Gastrocnemius medialis (tissue), 4 donors: ENCODE measurements at regions of chr1 and their contacts with region 1.

Region 1: GRCh38 chr1:86950712-86951419 is 36.4 kb downstream of the HS2ST1 start:
- DNase-seq: no peak
- ATAC-seq: no peak
- H3K4me3 ChIP-seq: no peak overlapping the region
- H3K27ac ChIP-seq: no peak overlapping the region
- H3K4me1 ChIP-seq: peaks cover 0 to 11% of the 10 kb centered on the region in 2 donors
- H3K27me3 ChIP-seq: no peaks in the 10 kb centered on the region
- CTCF ChIP-seq: no peak
- POLR2A ChIP-seq: no peak

Region 2: GRCh38 chr1:86218859-86219258 is 732.0 kb before region 1 on chr1:
- in situ Hi-C with region 1: no loop called
- intact Hi-C with region 1: no loop called
- DNase-seq: no peak
- ATAC-seq: no peak
- H3K4me3 ChIP-seq: no peak overlapping the region
- H3K27ac ChIP-seq: no peak overlapping the region
- H3K4me1 ChIP-seq: no peaks in the 10 kb centered on the region
- H3K27me3 ChIP-seq: no peaks in the 10 kb centered on the region
- CTCF ChIP-seq: no peak
- POLR2A ChIP-seq: no peak

Region 3: DNA sequence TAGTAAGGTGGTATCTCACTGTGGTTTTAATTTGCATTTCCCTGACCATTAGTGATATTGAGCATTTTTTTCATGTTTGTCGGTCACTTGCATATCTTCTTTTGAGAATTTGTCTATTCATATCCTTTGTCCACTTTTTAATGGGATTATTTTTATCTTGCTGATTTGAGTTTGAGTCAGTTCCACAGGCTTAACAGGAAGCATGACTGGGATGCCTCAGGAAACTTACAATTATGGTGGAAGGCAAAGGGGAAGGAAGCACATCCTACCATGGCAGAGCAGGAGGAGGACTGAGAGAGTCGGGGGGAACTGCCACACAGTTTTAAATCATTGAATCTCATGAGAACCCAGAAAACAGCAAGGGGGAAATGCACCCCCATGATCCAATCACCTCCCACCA is 605.8 kb before region 1 on chr1:
- in situ Hi-C with region 1: no loop called
- intact Hi-C with region 1: no loop called
- DNase-seq: no peak
- ATAC-seq: no peak
- H3K4me3 ChIP-seq: no peak overlapping the region
- H3K27ac ChIP-seq: no peak overlapping the region
- H3K4me1 ChIP-seq: no peaks in the 10 kb centered on the region
- H3K27me3 ChIP-seq: no peaks in the 10 kb centered on the region
- CTCF ChIP-seq: no peak
- POLR2A ChIP-seq: no peak

Region 4: GRCh38 chr1:86733340-86733739 is 217.5 kb before region 1 on chr1:
- in situ Hi-C with region 1: no loop called
- intact Hi-C with region 1: no loop called
- DNase-seq: no peak
- ATAC-seq: no peak
- H3K4me3 ChIP-seq: no peak overlapping the region
- H3K27ac ChIP-seq: peak overlapping the region in 1 of 4 donors; percentile 3
- H3K4me1 ChIP-seq: peaks cover 4% of the 10 kb centered on the region in 2 donors
- H3K27me3 ChIP-seq: no peaks in the 10 kb centered on the region
- CTCF ChIP-seq: no peak
- POLR2A ChIP-seq: no peak

Region 5: GRCh38 chr1:86852782-86853408 is 98.0 kb before region 1 on chr1:
- in situ Hi-C with region 1: loop called (anchors 10 to 25 kb)
- intact Hi-C with region 1: no loop called
- DNase-seq: no peak
- ATAC-seq: no peak
- H3K4me3 ChIP-seq: no peak overlapping the region
- H3K27ac ChIP-seq: no peak overlapping the region
- H3K4me1 ChIP-seq: no peaks in the 10 kb centered on the region
- H3K27me3 ChIP-seq: no peaks in the 10 kb centered on the region
- CTCF ChIP-seq: no peak
- POLR2A ChIP-seq: no peak